Activated CD4-positive, alpha-beta memory T cell treated with anti-CD3 and anti-CD28 coated beads, Interleukin-2, amount 10 ng/mL, durations not matched to agents 7 days and 5 days (primary cell): ENCODE measurements at regions of chr10 and their contacts with region 1.

Region 1: GRCh38 chr10:71893920-71894319 is 42.9 kb upstream of the PSAP start:
- DNase-seq: no peak
- H3K4me3 Mint-ChIP-seq: no peak overlapping the region
- H3K27ac Mint-ChIP-seq: no peak overlapping the region
- H3K4me1 Mint-ChIP-seq: peaks cover 9% of the 10 kb centered on the region
- H3K27me3 Mint-ChIP-seq: peaks cover 9% of the 10 kb centered on the region

Region 2: DNA sequence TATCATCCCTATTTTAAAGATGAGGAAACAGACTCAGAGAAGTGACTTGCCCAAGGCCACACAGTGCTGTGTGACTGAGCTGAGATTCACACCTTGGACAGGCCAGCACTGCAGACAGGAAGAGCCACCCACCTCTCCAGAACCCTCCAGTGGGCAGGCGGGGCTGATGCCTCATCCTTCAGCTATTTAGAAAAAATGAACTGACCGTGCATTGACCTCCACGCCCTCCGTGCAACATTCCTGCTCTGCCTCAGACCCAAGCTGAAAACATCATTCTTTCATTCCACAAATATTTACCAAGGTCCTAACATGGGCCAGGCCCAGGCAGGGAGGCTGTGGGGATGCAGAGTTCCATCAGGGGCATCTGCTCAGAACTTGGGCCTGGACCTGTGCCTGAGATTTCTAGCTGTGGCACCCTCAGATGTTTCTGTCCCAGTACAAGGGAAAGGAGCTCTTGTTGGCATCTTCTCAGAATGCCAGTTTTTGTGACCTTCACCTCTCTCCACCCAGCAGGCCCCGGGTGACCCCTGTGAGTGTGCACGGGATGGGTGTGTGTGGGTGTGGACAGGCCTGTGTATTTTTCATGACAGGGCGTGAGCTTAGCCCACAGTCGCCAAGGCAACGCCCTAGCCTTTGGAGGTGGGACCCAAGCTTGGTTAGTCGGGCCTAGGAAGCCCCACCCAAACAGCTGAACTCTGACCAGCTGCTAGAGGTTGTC is 127.1 kb before region 1 on chr10:
- CTCF ChIA-PET with region 1: no interaction called
- POLR2A ChIA-PET with region 1: no interaction called
- DNase-seq: peak; percentile 67
- H3K4me3 Mint-ChIP-seq: peak overlapping the region; percentile 57
- H3K27ac Mint-ChIP-seq: peak overlapping the region; percentile 91
- H3K4me1 Mint-ChIP-seq: peaks cover 85% of the 10 kb centered on the region
- H3K27me3 Mint-ChIP-seq: no peaks in the 10 kb centered on the region

Region 3: DNA sequence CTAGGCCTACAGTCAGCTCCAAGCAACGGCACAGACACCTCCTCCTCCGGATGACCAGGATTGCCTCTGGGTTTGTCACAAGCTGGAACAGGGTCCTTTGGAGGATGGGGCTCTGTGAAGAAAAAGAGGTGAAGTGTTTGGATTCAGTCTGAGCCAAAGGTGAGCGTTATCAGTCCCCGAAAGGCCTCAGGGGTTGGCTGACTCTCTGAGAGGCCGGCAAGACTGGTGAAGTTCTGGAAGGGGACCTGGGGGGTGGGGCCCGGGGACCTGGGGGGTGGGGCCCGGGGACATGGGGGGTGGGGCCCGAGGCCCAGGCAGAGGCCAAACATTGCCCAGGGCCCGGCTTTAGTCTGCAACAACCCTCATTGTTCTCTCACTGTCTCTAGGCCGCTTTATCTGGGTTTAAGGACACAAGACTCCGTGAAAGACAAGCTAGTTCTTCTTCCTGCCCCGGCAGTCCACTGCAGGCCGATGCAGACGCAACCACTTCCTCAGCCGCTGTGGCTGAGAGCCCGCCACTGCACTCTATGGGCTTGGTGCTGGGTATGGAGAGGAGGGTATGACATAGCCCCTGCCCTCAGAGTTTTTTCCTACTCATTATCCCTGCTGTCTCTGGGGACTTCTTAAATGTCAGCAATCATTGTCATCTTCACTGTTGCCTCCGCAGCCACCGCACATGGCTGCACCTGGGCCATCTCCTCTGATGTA is 15.4 kb before region 1 on chr10:
- CTCF ChIA-PET with region 1: interaction called, 19 read pairs
- POLR2A ChIA-PET with region 1: no interaction called
- DNase-seq: no peak
- H3K4me3 Mint-ChIP-seq: no peak overlapping the region
- H3K27ac Mint-ChIP-seq: no peak overlapping the region
- H3K4me1 Mint-ChIP-seq: peaks cover 4% of the 10 kb centered on the region
- H3K27me3 Mint-ChIP-seq: peaks cover 6% of the 10 kb centered on the region

Region 4: DNA sequence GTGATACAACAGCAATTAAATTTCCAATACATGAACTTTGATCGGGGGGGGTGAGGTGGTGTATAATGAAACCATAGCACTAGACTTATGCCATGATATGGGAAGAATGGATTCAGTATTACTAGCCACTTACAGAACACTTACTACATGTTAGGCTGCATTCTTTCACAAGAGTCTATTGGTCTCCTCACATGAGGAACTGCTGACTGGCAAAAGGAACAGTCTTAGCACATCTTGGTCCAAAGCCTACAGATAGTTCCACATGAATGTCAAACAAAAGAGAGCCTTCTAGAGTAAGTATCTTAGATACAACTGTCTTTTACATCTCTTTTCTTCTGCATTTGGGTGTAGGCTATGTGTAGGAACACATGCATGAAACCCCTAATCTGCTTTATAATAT is 576.7 kb after region 1 on chr10:
- CTCF ChIA-PET with region 1: no interaction called
- POLR2A ChIA-PET with region 1: no interaction called
- DNase-seq: no peak
- H3K4me3 Mint-ChIP-seq: no peak overlapping the region
- H3K27ac Mint-ChIP-seq: no peak overlapping the region
- H3K4me1 Mint-ChIP-seq: no peaks in the 10 kb centered on the region
- H3K27me3 Mint-ChIP-seq: no peaks in the 10 kb centered on the region